Lower leg skin (tissue), 4 donors: ENCODE measurements at regions of chr2 and their contacts with region 1.

Region 1: DNA sequence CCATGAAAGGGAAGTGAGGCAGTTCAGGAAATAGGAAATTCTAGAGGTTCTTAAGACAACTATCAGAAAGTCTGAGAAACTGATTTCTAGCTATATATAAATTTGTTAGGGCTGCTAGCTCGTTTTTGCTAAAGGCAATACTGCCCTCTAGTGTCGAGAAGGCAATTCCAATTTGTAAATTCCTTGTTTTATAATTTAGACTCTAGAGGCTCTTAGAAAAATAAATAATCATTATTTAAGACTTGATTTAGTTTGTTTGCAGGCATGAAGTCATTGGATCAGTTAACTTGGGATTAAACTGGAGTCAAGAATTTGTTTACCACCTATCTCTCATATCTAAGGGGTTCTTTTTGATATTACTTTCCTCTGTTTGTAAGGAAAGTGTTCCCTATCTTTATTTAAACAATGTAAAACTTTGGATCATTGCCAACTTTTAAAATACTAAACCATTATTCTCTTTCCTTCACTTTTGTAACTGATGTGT is 66.2 kb downstream of the ACVR2A start:
- DNase-seq: peak in 1 of 2 donors; percentile 18
- H3K4me3 ChIP-seq: no peak overlapping the region
- CTCF ChIP-seq: peak in 1 of 3 donors; percentile 44
- POLR2A ChIP-seq: no peak

Region 2: GRCh38 chr2:146908776-146909175 is 1002.3 kb before region 1 on chr2:
- intact Hi-C with region 1: no loop called
- DNase-seq: no peak
- H3K4me3 ChIP-seq: no peak overlapping the region
- CTCF ChIP-seq: no peak
- POLR2A ChIP-seq: no peak

Region 3: DNA sequence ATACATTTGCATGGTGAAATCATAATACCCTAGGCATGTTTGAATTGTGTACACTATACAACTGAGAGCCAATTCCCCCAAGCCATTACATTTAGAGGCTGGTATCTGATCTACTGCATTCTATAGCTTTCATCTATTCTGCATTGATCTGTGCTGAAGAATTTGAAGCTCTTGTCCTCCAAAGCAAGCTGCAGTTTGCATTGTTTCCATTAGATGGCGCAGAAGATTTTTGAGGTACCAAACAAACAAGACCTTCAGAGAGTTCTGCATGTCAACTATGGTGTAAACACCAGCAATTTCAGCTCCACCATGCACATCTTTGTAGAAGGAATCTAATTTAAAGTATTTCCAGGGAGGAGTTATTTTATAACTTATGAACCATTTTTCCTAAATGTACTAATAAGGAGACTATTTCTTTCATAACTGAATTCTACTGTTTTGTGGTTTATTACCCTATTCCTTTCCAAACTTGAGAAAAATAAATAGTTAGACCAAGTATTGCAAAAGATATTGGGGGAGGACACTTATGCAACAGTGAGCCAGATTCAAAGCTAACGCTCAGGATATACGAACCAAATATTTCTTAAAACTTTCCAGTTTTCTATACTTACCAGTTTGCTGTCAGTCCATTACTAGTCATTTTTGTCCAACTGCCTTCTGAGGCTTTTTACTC is 828.0 kb before region 1 on chr2:
- intact Hi-C with region 1: loop called (anchors 10 kb)
- DNase-seq: peak in 1 of 2 donors; percentile 78
- H3K4me3 ChIP-seq: no peak overlapping the region
- CTCF ChIP-seq: no peak
- POLR2A ChIP-seq: no peak